ENCODE measurements at regions of chr11 and their contacts with region 1.

Region 1: GRCh38 chr11:6443269-6444003 is 2.6 kb upstream of the HPX start:
- DNase-seq: peak; percentile 27
- H3K4me3 ChIP-seq: no peak overlapping the region
- H3K27ac ChIP-seq: no peak overlapping the region
- H3K4me1 ChIP-seq: no peaks in the 10 kb centered on the region
- H3K27me3 ChIP-seq: no peaks in the 10 kb centered on the region
- CTCF ChIP-seq: peak; percentile 82 to 90

Region 2: DNA sequence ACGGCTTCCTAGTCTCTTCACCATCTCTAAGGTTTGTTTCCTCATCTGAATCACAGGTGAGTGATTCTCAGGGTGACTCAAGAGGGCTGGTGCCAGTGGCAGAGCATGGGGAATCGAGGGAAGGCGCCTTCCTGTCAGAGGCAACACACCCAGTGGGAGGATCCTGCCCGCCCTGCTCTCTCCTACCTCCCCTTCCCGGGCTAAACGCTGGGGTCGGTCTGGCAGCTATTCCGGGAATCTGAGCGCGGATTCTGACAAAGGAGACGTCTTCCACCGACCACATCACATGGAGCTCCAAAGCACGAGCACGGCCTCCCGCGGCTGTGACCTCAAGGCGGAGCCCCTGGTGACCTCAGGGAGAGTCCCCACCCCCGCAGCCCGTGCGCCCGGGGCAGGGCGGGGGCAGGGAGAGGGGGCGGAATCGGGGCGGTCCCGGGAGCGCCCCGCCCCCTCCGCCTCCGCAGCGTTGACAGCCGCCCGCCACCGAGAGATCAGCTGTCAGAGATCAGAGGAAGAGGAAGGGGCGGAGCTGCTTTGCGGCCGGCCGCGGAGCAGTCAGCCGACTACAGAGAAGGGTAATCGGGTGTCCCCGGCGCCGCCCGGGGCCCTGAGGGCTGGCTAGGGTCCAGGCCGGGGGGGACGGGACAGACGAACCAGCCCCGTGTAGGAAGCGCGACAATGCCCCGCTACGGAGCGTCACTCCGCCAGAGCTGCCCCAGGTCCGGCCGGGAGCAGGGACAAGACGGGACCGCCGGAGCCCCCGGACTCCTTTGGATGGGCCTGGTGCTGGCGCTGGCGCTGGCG is 53.3 kb before region 1 on chr11 and contains the start of gene SMPD1:
- CTCF ChIA-PET with region 1: interaction called, 4 read pairs
- dilution Hi-C with region 1: no loop called
- in situ Hi-C with region 1: loop called in 1 of 2 experiments (anchors 10 kb)
- intact Hi-C with region 1: no loop called
- DNase-seq: peak; percentile 95
- H3K4me3 ChIP-seq: peak within 1 kb of the TSS; percentile 65 to 93 (median 67)
- H3K27ac ChIP-seq: peak within 1 kb of the TSS; percentile 87
- H3K4me1 ChIP-seq: peaks cover 21% of the 10 kb centered on the region
- H3K27me3 ChIP-seq: no peaks in the 10 kb centered on the region
- CTCF ChIP-seq: no peak
- total RNA-seq, gene SMPD1: 17.0 to 24.1 TPM

Region 3: GRCh38 chr11:6473481-6474422 is 30.3 kb after region 1 on chr11 and contains the start of gene TRIM3:
- CTCF ChIA-PET with region 1: no interaction called
- dilution Hi-C with region 1: loop called (anchors 5 kb)
- in situ Hi-C with region 1: no loop called
- intact Hi-C with region 1: no loop called
- DNase-seq: peak; percentile 82
- H3K4me3 ChIP-seq: peak within 1 kb of the TSS; percentile 62 to 80 (median 70)
- H3K27ac ChIP-seq: peak within 1 kb of the TSS; percentile 66
- H3K4me1 ChIP-seq: peaks cover 17% of the 10 kb centered on the region
- H3K27me3 ChIP-seq: no peaks in the 10 kb centered on the region
- CTCF ChIP-seq: peak in 1 of 2 donors; percentile 49
- total RNA-seq, gene TRIM3: 9.3 to 20.8 TPM

Region 4: DNA sequence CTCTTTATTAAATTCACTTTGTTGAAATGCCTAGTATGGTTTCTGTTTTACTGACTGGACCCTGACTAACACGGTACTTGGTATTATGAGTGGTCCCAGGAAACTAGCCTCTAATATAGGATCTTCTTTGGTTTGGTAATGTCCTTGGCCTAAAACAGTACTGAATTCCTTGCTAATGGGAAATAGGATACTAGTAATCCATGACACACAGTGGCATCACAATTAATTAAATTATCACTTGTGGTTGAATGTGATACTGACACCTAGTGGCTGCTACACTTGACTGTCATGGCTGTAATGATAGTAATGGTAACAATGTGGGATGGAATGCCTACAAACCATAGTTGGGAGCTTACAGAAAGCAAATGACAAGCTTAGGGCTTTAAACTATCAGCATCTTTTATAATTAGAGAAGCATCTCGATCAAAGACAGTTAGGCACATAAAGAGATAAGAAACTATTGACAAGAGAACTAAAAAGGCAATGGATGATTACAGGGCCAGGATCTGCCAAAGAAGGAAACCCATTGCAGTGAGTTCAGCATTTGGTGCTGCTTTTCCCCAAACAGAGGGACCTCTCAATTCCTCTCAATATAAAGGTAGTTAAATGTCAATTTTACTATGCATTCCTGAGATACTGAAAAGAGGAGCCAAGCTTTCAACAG is 62.3 kb after region 1 on chr11:
- CTCF ChIA-PET with region 1: interaction called, 7 read pairs
- dilution Hi-C with region 1: no loop called
- in situ Hi-C with region 1: no loop called
- intact Hi-C with region 1: loop called (anchors 2 kb)
- DNase-seq: peak; percentile 65
- H3K4me3 ChIP-seq: no peak overlapping the region
- H3K27ac ChIP-seq: no peak overlapping the region
- H3K4me1 ChIP-seq: peaks cover 9% of the 10 kb centered on the region
- H3K27me3 ChIP-seq: no peaks in the 10 kb centered on the region
- CTCF ChIP-seq: peak; percentile 74 to 79

Region 5: DNA sequence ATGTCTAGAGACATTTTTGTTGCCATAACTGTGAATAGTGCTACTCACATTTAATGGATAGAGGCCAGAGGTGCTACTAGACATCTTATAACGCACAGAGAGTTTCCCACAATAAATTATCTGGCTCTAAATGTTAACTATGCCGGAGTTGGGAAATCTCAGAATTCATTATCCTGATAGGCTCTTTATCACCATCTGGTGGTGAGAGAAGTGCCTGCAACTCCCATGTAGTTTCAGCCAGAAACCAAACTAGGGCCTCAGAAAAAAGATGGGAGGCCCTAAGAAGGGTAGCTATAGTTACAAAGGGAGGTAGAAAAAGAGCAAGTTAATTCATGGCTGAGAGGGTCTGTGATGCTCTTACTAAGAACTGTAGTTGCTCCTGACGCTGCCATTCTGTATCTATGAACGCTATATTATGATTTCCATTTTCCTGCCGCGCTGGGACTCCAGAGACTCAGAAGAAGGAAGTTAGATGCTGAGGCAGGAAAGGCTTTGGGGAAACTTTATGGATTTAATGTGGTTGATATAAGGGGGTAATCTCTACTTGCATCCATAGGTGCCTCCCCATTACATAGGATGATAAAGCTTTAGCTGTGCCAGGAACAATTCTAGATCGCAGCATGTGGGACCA is 262.6 kb after region 1 on chr11:
- CTCF ChIA-PET with region 1: no interaction called
- dilution Hi-C with region 1: no loop called
- in situ Hi-C with region 1: no loop called
- intact Hi-C with region 1: loop called (anchors 1 kb)
- DNase-seq: peak; percentile 21
- H3K4me3 ChIP-seq: no peak overlapping the region
- H3K27ac ChIP-seq: no peak overlapping the region
- H3K4me1 ChIP-seq: no peaks in the 10 kb centered on the region
- H3K27me3 ChIP-seq: no peaks in the 10 kb centered on the region
- CTCF ChIP-seq: peak; percentile 80 to 91

Region 6: GRCh38 chr11:6876914-6877313 is 433.5 kb after region 1 on chr11:
- CTCF ChIA-PET with region 1: no interaction called
- dilution Hi-C with region 1: no loop called
- in situ Hi-C with region 1: no loop called
- intact Hi-C with region 1: no loop called
- DNase-seq: no peak
- H3K4me3 ChIP-seq: no peak overlapping the region
- H3K27ac ChIP-seq: no peak overlapping the region
- H3K4me1 ChIP-seq: no peaks in the 10 kb centered on the region
- H3K27me3 ChIP-seq: no peaks in the 10 kb centered on the region
- CTCF ChIP-seq: no peak

Measured in mammary epithelial cell (primary cell).